ENCODE measurements at regions of chr4 and their contacts with region 1.

Region 1: DNA sequence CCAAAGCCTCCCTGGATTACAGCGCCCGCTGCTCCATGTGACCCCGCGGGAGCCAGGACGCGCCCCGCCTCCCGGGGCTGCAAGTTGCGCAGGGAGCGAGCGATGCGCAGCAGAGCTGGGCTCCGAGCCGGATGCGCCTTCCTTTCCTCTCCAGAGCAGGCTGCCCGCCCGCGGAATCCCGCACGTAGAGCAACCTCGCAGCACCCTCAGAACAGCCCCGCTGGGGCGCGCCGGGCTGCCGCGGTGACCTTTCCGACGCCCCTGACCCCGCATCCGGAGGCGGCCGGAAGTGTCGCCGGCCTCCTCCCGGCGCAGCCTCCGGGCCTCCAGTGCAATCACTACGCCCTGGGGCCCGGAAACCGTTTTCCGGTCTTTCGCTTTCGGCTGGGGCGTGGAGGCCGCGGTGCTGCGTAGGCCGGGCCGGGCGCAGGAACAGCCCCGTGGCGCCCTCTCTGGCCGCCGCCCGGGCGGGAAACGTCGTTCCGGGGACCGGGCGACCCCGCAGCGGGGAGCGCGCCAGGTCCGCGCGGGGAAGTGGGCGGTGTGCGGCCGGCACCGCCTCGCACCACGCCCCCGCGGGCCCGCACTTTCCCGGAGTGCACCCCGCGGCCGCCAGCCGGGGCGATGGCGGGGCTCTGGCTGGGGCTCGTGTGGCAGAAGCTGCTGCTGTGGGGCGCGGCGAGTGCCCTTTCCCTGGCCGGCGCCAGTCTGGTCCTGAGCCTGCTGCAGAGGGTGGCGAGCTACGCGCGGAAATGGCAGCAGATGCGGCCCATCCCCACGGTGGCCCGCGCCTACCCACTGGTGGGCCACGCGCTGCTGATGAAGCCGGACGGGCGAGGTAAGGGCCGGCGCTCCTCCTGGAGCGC is at the start of gene CYP4V2:
- DNase-seq: peak; percentile 88
- H3K4me3 Mint-ChIP-seq: peak within 1 kb of the TSS; percentile 83
- H3K27ac Mint-ChIP-seq: peak within 1 kb of the TSS; percentile 87
- H3K4me1 Mint-ChIP-seq: peaks cover 31% of the 10 kb centered on the region
- H3K27me3 Mint-ChIP-seq: peaks cover 2% of the 10 kb centered on the region
- total RNA-seq, gene CYP4V2: 10.0 to 10.9 TPM

Region 2: DNA sequence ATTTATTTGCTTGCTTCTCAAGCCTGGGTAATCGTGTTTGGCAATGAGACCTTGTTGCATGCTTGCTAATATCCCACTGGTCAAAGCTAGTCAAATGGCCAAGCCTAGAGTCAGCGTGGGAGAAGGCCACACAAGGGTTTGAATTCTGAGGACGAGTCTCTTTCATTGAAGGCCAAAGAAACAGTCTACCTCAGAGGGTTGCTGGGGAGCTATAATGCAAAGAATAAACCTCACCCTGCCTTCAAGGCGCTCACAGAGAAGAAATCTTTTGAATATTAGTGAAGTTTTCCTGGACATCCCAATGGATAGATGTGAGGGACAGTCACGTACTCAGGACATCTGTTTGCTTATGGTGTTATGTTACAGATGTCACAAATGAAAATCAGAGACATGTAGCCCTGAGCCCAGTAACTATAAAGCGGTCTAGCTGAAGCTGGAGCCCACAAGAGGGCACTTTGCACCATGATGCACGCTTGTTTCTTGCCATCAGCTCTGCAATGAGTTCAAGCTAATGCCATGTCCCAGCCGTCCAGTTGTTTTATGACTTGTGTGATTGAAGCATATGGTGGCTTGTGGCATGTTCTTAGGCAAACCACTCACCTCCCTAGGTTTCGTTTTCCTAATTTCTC is 123.6 kb before region 1 on chr4:
- CTCF ChIA-PET with region 1: interaction called, 21 read pairs
- POLR2A ChIA-PET with region 1: interaction called, 12 read pairs
- DNase-seq: peak; percentile 51
- H3K4me3 Mint-ChIP-seq: no peak overlapping the region
- H3K27ac Mint-ChIP-seq: no peak overlapping the region
- H3K4me1 Mint-ChIP-seq: peaks cover 15% of the 10 kb centered on the region
- H3K27me3 Mint-ChIP-seq: peaks cover 5% of the 10 kb centered on the region

Region 3: GRCh38 chr4:186161138-186161537 is 30.3 kb before region 1 on chr4:
- CTCF ChIA-PET with region 1: interaction called, 8 read pairs
- POLR2A ChIA-PET with region 1: interaction called, 13 read pairs
- DNase-seq: peak; percentile 39
- H3K4me3 Mint-ChIP-seq: peak overlapping the region; percentile 8
- H3K27ac Mint-ChIP-seq: no peak overlapping the region
- H3K4me1 Mint-ChIP-seq: peaks cover 5% of the 10 kb centered on the region
- H3K27me3 Mint-ChIP-seq: no peaks in the 10 kb centered on the region

Region 4: DNA sequence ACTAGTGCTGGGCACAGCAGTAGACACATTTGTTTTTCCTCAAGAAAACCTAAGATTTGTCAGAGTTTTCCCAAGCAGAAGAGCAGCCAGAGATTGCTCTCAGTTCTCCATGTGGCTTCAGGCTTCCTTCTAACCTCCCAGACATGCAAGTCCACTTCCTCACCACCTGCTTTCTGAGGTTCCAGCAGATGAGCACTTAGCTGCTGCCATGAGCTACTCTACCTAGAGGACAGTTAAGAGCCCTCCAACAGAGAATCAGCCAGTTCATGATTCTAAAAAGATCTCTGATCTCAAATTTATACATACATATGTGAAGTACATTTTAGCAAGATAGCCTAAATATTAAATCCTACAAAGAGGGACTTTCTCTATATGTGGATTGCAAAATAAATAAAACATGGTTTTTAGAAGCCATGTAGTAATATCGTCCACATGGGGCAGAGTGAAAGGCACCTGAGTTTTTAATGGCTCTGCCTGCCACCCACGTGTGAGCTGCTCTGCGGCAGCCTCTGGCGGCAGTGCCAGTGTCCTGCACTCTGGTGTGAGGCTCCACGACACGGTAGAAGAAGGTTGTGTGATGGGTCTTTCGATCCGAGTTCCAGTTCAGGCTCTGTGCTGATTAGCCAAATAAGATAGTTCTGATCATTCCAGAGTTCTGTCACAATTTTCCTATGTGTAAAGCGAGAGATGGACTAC is 10.2 kb after region 1 on chr4:
- CTCF ChIA-PET with region 1: interaction called, 23 read pairs
- POLR2A ChIA-PET with region 1: interaction called, 84 read pairs
- DNase-seq: peak; percentile 77
- H3K4me3 Mint-ChIP-seq: no peak overlapping the region
- H3K27ac Mint-ChIP-seq: peak overlapping the region; percentile 8
- H3K4me1 Mint-ChIP-seq: peaks cover 35% of the 10 kb centered on the region
- H3K27me3 Mint-ChIP-seq: no peaks in the 10 kb centered on the region

Measured in activated CD4-positive, alpha-beta memory T cell treated with anti-CD3 and anti-CD28 coated beads, Interleukin-2, amount 10 ng/mL, durations not matched to agents 7 days and 5 days (primary cell).